Heart right ventricle (tissue), 16 donors: ENCODE measurements at regions of chr1 and their contacts with region 1.

Region 1: GRCh38 chr1:82059959-82060358 is 259.2 kb downstream of the ADGRL2 start:
- DNase-seq: no peak
- ATAC-seq: no peak
- H3K4me3 ChIP-seq: no peak overlapping the region
- H3K27ac ChIP-seq: no peak overlapping the region
- H3K4me1 ChIP-seq: no peaks in the 10 kb centered on the region
- H3K27me3 ChIP-seq: no peaks in the 10 kb centered on the region
- CTCF ChIP-seq: no peak

Region 2: GRCh38 chr1:80066060-80066459 is 1993.9 kb before region 1 on chr1:
- intact Hi-C with region 1: loop called in 1 of 10 experiments (anchors 10 kb)
- DNase-seq: no peak
- ATAC-seq: no peak
- H3K4me3 ChIP-seq: no peak overlapping the region
- H3K27ac ChIP-seq: no peak overlapping the region
- H3K4me1 ChIP-seq: no peaks in the 10 kb centered on the region
- H3K27me3 ChIP-seq: no peaks in the 10 kb centered on the region
- CTCF ChIP-seq: no peak